Natural killer cell (primary cell): ENCODE measurements at regions of chr1 and their contacts with region 1.

Region 1: DNA sequence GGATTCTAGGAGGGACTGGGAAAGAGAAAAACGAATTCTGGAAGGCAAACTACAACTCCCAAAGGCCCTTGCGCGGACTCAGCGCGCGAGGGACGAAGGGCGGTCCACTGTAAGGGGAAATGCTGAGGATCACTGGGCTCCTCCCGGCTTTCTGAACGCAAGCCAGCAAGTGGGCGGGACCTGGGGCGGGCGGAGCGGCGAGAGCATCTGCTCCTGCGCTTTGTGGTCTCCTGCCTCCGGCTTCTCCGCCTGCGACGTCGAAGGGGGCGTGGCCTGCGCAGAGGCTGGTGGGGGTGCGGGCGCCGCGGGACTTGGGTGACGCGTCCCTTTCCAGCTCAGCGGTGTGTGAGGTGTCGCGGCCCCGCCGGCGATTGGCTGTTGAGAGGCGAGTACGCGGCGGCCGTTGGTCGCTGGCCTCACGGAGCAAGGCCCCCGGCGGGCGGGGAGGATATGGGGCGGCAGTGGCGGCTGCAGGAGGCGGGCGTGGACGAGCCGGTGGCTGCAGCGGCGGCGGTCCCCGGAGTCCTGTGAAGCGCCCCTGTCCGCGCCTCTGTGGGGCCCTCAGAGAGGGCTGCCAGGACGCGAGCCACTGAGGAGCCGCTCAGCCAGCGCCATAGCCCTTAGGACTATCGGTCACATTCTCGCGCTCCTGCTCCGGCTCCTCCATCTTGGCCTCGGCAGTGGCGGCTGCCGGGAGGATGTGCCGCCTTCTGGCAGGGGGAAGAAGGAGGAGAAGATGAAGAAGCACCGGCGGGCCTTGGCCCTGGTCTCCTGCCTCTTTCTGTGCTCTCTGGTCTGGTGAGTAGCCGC is at the start of gene SUCO:
- DNase-seq: peak; percentile 99 to 100
- ATAC-seq: peak; percentile 79 to 93 (median 81)
- H3K4me3 ChIP-seq: peak within 1 kb of the TSS; percentile 81
- H3K4me3 Mint-ChIP-seq: peak within 1 kb of the TSS; percentile 99
- H3K27ac ChIP-seq: peak within 1 kb of the TSS; percentile 97
- H3K27ac Mint-ChIP-seq: peak within 1 kb of the TSS; percentile 99 to 100
- H3K4me1 ChIP-seq: peaks cover 6% of the 10 kb centered on the region
- H3K4me1 Mint-ChIP-seq: peaks cover 50 to 52% of the 10 kb centered on the region in 2 donors
- H3K27me3 ChIP-seq: no peaks in the 10 kb centered on the region
- H3K27me3 Mint-ChIP-seq: peaks cover 5% of the 10 kb centered on the region in 2 donors
- CTCF ChIP-seq: no peak
- total RNA-seq, gene SUCO: 86.0 to 97.5 (median 96.0) TPM

Region 2: DNA sequence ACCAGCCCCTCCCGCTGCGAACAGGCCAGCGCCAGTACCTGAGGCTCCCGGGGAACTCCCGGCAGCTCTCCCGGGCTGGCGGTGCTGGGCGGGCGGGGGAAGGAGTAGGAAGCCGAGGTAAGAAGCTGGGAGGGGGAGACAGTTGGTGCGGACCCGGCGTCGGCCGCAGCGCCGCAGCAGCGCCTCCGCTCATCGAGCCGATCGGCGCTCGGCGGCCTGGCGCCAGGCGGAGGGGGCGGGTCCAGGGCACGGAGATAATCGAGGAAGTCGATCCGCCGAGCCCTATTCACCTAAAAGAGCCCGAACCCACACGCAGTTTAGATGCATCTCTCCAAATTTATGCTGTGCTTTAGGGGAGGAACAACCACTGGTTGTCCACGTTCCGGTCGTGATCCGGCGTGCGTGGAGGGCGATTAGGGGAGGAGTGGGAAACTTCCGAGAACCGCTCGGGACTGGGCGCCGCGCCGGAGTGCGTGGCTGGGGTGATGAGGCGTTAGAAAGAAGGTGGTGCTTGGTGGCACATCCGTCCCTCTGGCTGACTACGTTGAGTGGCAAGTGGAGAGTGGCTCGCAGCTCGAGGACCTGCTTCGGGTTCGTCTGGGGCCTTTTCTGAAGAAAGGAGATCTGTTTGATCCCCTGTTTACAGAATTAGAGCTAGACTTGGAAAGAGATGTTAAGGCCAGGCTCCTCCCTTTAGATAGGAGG is 790.9 kb before region 1 on chr1 and contains the start of gene VAMP4:
- intact Hi-C with region 1: loop called (anchors 5 kb)
- DNase-seq: peak; percentile 82 to 92
- ATAC-seq: peak; percentile 86 to 95 (median 90)
- H3K4me3 ChIP-seq: peak within 1 kb of the TSS; percentile 86
- H3K4me3 Mint-ChIP-seq: peak within 1 kb of the TSS; percentile 98
- H3K27ac ChIP-seq: peak within 1 kb of the TSS; percentile 94
- H3K27ac Mint-ChIP-seq: peak within 1 kb of the TSS; percentile 96 to 100
- H3K4me1 ChIP-seq: peaks cover 8% of the 10 kb centered on the region
- H3K4me1 Mint-ChIP-seq: peaks cover 54 to 58% of the 10 kb centered on the region in 2 donors
- H3K27me3 ChIP-seq: no peaks in the 10 kb centered on the region
- H3K27me3 Mint-ChIP-seq: no peaks in the 10 kb centered on the region
- CTCF ChIP-seq: no peak
- total RNA-seq, gene VAMP4: 17.5 to 24.2 (median 20.7) TPM

Region 3: DNA sequence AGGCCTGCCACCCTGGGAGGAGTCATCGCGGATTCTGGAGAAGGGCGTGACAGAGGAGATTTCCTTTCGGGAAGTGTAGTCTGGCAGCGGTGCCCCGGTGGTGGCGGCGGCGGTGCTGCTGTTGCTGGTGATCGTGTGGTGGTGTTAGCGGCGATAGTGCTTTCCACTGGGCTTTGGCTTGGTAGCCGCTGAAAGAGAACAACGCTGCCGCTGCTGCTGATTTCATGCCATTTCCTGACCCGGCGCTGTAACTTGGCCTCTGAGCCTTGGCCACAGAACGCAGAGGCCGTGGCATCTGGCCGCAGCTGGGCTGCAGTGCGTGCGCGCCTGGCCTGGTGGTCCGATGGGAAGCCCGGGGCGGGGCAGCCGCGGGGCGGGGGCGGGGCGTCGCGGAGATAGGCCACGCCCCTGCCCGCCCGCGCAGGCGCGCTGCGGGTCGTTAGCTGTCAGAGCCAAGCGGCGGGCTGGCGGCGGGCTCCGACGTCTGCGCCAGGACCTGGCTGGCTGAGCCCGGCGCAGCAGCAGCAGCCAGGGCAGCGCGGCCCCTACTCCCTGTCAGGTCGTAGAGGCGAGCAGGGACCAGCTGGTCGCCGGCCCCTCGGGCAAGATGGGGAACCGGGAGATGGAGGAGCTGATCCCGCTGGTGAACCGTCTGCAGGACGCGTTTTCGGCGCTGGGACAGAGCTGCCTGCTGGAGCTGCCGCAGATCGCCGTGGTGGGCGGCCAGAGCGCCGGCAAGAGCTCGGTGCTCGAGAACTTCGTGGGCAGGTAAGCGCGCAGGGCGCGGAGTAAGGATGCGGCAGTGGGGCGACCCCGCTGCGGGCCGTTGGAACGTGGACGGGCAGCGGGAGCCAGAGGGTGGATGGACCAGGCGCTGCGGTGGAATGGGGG is 691.6 kb before region 1 on chr1 and contains the start of gene DNM3:
- intact Hi-C with region 1: loop called (anchors 2 kb)
- DNase-seq: peak; percentile 87 to 88
- ATAC-seq: peak; percentile 95 to 96 (median 95)
- H3K4me3 ChIP-seq: peak within 1 kb of the TSS; percentile 85
- H3K4me3 Mint-ChIP-seq: peak within 1 kb of the TSS; percentile 93
- H3K27ac ChIP-seq: peak within 1 kb of the TSS; percentile 25
- H3K27ac Mint-ChIP-seq: peak within 1 kb of the TSS; percentile 76 to 85
- H3K4me1 ChIP-seq: peaks cover 18% of the 10 kb centered on the region
- H3K4me1 Mint-ChIP-seq: peaks cover 18 to 24% of the 10 kb centered on the region in 2 donors
- H3K27me3 ChIP-seq: peaks cover 30% of the 10 kb centered on the region
- H3K27me3 Mint-ChIP-seq: peaks cover 19 to 46% of the 10 kb centered on the region in 2 donors
- CTCF ChIP-seq: no peak
- total RNA-seq, gene DNM3: 2.5 to 3.3 (median 2.8) TPM

Region 4: GRCh38 chr1:172497230-172497629 is 35.7 kb before region 1 on chr1:
- intact Hi-C with region 1: no loop called
- DNase-seq: no peak
- ATAC-seq: no peak
- H3K4me3 ChIP-seq: no peak overlapping the region
- H3K4me3 Mint-ChIP-seq: no peak overlapping the region
- H3K27ac ChIP-seq: no peak overlapping the region
- H3K27ac Mint-ChIP-seq: no peak overlapping the region
- H3K4me1 ChIP-seq: no peaks in the 10 kb centered on the region
- H3K4me1 Mint-ChIP-seq: no peaks in the 10 kb centered on the region
- H3K27me3 ChIP-seq: no peaks in the 10 kb centered on the region
- H3K27me3 Mint-ChIP-seq: peaks cover 3 to 5% of the 10 kb centered on the region in 2 donors
- CTCF ChIP-seq: no peak

Region 5: GRCh38 chr1:172708452-172708851 is 175.5 kb after region 1 on chr1:
- intact Hi-C with region 1: loop called (anchors 10 kb)
- DNase-seq: peak in 1 of 2 donors; percentile 69
- ATAC-seq: peak; percentile 64 to 82 (median 67)
- H3K4me3 ChIP-seq: no peak overlapping the region
- H3K4me3 Mint-ChIP-seq: peak overlapping the region; percentile 74
- H3K27ac ChIP-seq: peak overlapping the region; percentile 20
- H3K27ac Mint-ChIP-seq: peak overlapping the region; percentile 81 to 88
- H3K4me1 ChIP-seq: peaks cover 46% of the 10 kb centered on the region
- H3K4me1 Mint-ChIP-seq: peaks cover 13 to 15% of the 10 kb centered on the region in 2 donors
- H3K27me3 ChIP-seq: no peaks in the 10 kb centered on the region
- H3K27me3 Mint-ChIP-seq: no peaks in the 10 kb centered on the region
- CTCF ChIP-seq: no peak

Region 6: DNA sequence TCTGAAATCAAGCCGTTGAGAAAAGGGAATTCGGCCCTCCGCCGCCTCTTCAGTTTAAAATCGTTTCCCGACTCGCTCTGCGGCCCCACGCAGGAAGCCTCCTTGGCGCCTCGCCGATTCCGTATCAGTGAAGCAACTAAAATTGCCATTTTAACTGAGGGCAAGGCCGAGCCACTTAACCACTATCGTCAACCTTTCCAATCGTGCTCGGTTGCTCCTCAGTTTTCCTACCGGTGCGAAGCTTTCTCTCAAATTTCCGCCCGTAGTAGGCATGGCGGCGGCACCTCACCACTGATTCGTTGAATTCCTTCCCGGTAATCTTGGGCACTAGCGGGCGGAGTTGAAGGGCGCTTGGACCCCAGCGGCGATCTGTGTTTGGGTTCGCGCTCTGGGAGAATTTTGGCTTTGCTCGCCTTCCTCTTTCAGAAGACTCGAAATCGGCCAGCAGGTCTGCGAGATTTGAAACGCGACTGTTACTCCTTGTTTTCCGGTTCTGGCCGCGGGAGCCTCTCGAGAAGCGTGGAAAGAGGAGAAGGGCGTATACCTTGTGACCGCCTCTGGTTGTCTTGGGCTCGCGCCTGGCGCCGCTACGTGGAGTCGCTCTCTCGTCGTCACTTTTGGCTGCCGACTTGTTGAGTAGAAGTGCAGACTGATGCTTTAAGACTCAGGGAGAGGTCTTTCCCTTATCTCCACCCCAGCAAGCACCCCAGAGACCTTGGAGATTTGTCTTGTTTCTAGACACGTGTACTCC is 1291.6 kb after region 1 on chr1 and contains the starts of genes CENPL and DARS2:
- intact Hi-C with region 1: loop called (anchors 1 kb)
- DNase-seq: peak; percentile 81 to 96
- ATAC-seq: peak; percentile 84 to 93 (median 88)
- H3K4me3 ChIP-seq: peak within 1 kb of the TSS; percentile 94
- H3K4me3 Mint-ChIP-seq: peak within 1 kb of the TSS; percentile 99
- H3K27ac ChIP-seq: peak within 1 kb of the TSS; percentile 85
- H3K27ac Mint-ChIP-seq: peak within 1 kb of the TSS; percentile 95 to 98
- H3K4me1 ChIP-seq: peaks cover 17% of the 10 kb centered on the region
- H3K4me1 Mint-ChIP-seq: peaks cover 27 to 38% of the 10 kb centered on the region in 2 donors
- H3K27me3 ChIP-seq: no peaks in the 10 kb centered on the region
- H3K27me3 Mint-ChIP-seq: no peaks in the 10 kb centered on the region
- CTCF ChIP-seq: no peak
- total RNA-seq, gene CENPL: 8.8 to 16.4 (median 10.0) TPM
- total RNA-seq, gene DARS2: 5.0 to 8.4 (median 5.8) TPM